AG04450 (cell line): ENCODE measurements at regions of chrX and their contacts with region 1.

Region 1: DNA sequence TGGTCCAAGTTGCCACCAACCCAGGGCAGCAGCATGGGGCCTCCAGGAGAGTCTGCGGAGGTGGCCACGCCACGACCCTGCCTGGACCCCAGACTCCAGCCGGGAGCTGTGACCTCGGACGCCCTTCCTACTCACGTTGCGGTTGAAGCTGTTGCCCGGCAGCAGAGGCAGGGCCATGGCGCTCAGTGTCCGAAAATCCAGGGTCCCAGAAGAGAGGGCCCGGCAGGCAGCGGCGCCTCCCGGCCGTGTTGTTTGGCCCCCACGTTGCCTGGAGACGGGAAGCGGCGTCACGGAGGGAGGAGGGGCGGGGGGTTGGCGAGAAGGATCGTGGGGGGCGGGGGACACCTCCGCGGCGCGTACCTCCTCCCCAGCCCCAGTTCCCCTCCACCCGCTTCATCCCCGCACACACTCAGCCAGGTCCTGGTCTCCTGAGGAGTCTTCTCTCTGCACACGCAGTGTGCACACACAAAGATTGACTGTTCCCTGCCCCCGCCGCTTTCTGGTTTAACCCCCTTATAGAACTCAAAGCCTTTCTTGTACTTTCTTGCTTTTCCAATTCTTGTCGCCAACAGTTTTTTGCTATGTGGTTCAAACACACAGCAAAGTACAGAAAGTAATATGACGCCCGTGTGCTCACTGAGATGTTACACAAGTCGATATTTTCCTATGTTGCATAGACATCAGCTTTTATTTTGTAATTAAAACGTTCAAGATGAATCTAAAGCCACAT is at the start of gene EFHC2:
- DNase-seq: no peak
- H3K4me3 ChIP-seq: peak within 1 kb of the TSS; percentile 48
- H3K27ac ChIP-seq: no peak within 1 kb of the TSS
- H3K27me3 ChIP-seq: no peaks in the 10 kb centered on the region
- CTCF ChIP-seq: no peak
- polyA plus RNA-seq, gene EFHC2: 0.40 and 0.42 TPM in 2 replicates

Region 2: DNA sequence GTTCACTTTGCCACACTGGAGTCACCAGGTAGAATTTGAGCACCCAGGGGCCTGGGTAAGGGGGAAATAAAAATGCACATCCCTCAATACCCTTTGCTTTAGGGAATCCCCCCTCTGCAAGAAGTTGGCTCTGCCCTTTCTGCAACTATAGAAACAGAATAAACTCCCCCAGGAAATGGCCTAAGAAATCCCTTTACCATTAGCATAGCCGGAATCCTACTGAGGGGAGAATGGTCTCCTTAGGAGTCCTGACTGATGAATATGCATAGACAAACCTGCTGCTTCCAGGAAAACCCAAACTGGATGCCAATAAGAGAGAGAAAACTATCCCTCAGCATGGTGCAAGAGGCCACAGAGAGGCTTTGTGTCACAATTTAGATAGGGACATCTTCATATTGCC is 11.1 kb before region 1 on chrX:
- CTCF ChIA-PET with region 1: interaction called, 11 read pairs
- POLR2A ChIA-PET with region 1: no interaction called
- DNase-seq: no peak
- H3K4me3 ChIP-seq: no peak overlapping the region
- H3K27ac ChIP-seq: no peak overlapping the region
- H3K27me3 ChIP-seq: no peaks in the 10 kb centered on the region
- CTCF ChIP-seq: no peak